ENCODE measurements at regions of chr18 and their contacts with region 1.

Region 1: DNA sequence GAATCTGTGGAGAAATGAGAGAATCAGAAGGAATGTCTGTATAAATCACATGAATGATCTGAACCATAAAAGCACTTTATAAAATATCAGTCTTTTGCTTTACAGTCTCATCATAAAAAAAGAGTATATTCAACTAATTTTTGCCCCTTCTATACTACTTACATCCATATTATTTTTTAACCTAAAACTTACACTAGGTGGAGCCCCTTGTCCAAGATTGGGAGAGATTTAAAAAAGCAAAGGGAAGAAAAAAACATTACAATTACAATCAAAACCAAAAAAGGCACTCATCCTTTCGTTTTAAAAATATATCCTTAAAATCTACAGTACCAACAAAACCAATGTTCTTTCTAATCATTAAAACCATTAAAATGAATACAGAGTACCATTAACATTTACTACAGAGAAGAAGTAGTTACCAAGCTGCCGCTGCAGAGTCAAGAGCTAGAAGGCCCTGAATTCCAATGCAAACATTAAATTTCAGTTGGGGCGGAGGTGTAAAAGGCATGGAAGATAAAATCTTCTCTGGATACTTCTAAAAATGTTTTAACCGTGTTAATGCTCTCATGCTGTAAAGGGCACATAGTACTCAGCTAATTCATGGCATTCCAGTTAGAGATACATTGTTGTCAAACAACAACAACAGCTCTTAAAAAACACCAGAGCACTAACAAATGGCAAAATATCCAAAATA is 56.7 kb upstream of the EPB41L3 start:
- DNase-seq: no peak
- ATAC-seq: no peak
- H3K4me3 ChIP-seq: no peak overlapping the region
- H3K4me1 ChIP-seq: peaks cover 3% of the 10 kb centered on the region
- CTCF ChIP-seq: no peak

Region 2: DNA sequence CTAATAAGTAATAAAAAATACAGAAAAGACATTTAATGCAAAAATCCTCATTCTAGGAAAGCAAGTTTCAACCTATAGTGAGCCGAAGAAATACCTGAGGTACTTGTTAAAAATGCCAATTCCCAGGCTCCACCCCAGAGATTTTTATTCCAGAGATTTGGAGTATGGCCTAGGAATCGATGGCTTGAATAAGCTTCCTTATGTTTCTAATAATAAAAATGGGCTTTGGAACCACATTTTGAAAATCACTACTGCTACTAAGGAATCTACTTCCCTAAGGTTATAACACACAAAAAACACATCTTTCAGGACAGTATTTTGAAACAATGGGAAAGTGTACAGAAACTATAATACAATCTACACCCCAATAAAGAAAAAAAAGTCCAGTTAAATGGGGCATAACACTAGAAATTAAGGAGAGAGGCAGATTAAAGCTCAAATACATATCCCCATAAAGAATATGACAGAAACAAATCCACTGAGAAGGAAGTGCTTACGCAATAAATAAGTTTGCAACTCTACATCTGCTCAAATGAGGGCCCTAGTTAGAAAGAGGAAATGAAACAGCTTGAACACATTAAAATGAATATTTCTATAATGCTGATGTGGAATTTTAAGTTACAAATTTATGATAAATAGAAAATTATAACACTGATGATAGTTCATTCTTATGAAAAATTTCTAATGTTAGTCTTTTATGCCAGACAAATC is 160.4 kb before region 1 on chr18:
- intact Hi-C with region 1: no loop called
- DNase-seq: no peak
- ATAC-seq: no peak
- H3K4me3 ChIP-seq: no peak overlapping the region
- H3K4me1 ChIP-seq: no peaks in the 10 kb centered on the region
- CTCF ChIP-seq: no peak

Region 3: DNA sequence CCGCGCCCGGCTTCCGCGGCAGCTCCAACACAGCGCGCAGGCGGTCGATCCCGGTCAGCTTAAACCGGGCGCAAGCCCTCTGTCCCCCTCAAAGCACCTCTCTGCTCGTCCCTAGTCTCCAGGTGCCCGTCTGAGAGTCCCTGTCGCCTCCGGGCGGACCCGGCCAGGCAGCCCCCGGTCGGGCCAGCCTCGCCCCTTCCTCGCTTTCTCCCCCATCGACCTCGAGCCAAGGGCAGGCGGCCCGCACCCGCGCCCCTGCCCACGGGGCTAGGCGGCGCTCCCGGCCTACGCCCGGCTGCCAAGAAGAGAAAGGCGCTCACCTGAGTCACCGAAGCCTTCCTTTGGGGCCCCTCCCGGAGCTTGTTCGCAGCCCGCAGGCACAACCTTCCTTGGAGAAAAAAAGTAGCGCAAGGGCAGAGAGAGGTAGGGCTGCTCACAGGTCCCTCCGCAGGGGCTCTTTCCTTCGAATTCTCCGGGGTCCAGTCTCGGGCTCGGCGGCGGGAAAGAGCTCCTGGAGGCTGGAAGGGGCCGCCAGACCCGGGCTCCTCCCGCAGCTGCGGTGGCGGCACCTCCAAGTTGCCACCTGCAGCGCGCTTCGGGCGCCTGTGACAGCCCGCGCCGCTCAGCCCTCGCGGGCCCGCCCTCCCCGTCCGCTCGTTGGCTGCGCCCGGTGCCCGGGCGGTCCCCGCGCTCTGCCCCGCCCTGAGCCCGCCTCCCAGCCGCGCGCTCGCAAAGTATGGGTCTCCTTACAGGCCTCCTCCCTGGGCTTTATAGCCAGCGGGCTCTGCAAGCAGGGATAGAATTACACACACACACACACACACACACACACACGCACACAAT is 29.8 kb after region 1 on chr18:
- intact Hi-C with region 1: loop called in 1 of 2 experiments (anchors 2 kb)
- DNase-seq: peak; percentile 86 to 93 (median 88)
- ATAC-seq: peak; percentile 84
- H3K4me3 ChIP-seq: peak overlapping the region; percentile 36
- H3K4me1 ChIP-seq: peaks cover 9% of the 10 kb centered on the region
- CTCF ChIP-seq: no peak

Region 4: GRCh38 chr18:5841518-5841917 is 241.0 kb after region 1 on chr18:
- intact Hi-C with region 1: no loop called
- DNase-seq: no peak
- ATAC-seq: no peak
- H3K4me3 ChIP-seq: no peak overlapping the region
- H3K4me1 ChIP-seq: no peaks in the 10 kb centered on the region
- CTCF ChIP-seq: no peak

Measured in mucosa of descending colon (tissue), 3 donors.